Colonic mucosa (tissue), 4 donors: ENCODE measurements at regions of chr13 and their contacts with region 1.

Region 1: GRCh38 chr13:42110410-42111155 is 62.1 kb downstream of the DGKH start:
- DNase-seq: peak; percentile 30
- H3K4me3 ChIP-seq: no peak overlapping the region
- H3K27ac ChIP-seq: no peak overlapping the region
- H3K4me1 ChIP-seq: no peaks in the 10 kb centered on the region
- H3K27me3 ChIP-seq: no peaks in the 10 kb centered on the region
- CTCF ChIP-seq: peak; percentile 66

Region 2: GRCh38 chr13:41670873-41671443 is 439.6 kb before region 1 on chr13:
- intact Hi-C with region 1: loop called (anchors 5 kb)
- DNase-seq: no peak
- H3K4me3 ChIP-seq: no peak overlapping the region
- H3K27ac ChIP-seq: no peak overlapping the region
- H3K4me1 ChIP-seq: no peaks in the 10 kb centered on the region
- H3K27me3 ChIP-seq: no peaks in the 10 kb centered on the region
- CTCF ChIP-seq: no peak